Cardiac septum (tissue), 1 donor: ENCODE measurements at regions of chr18 and their contacts with region 1.

Region 1: DNA sequence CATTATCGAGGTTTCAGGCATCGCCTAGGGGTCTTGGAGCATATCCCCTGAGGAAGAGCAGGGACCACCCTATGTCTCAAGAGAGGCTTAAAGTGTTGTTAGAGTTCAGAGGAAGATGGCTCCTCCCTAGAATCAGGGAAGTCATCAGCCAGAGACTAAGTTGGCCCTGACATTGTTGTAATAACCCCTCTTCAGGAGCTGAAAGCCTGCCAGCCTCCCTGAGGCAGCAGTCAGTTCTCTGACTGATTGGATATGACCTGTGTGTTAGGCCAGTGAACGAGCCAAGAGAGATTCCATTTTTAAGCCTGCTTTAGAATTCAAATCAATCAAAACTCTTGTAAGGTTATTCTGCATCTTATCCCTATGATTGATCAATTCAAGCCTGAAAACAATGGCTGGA is 34.9 kb downstream of the ARHGAP28 start:
- DNase-seq: no peak

Region 2: GRCh38 chr18:6677086-6677485 is 87.3 kb before region 1 on chr18:
- intact Hi-C with region 1: loop called (anchors 10 kb)
- DNase-seq: no peak